Transverse colon (tissue), 4 donors: ENCODE measurements at regions of chr3 and their contacts with region 1.

Region 1: GRCh38 chr3:50674349-50675178 is at the start of gene DOCK3:
- DNase-seq: peak; percentile 55
- H3K4me3 ChIP-seq: peak within 1 kb of the TSS; percentile 22 to 47 (median 40)
- H3K27ac ChIP-seq: no peak within 1 kb of the TSS
- H3K4me1 ChIP-seq: peaks cover 0 to 14% (median 11%) of the 10 kb centered on the region in 4 donors
- H3K27me3 ChIP-seq: peaks cover 85% of the 10 kb centered on the region
- CTCF ChIP-seq: no peak
- EP300 ChIP-seq: no peak
- POLR2A ChIP-seq: no peak
- total RNA-seq, gene DOCK3: 0.41 to 0.75 (median 0.62) TPM

Region 2: GRCh38 chr3:50689558-50689957 is 15.0 kb after region 1 on chr3:
- in situ Hi-C with region 1: no loop called
- intact Hi-C with region 1: no loop called
- DNase-seq: no peak
- H3K4me3 ChIP-seq: no peak overlapping the region
- H3K27ac ChIP-seq: no peak overlapping the region
- H3K4me1 ChIP-seq: no peaks in the 10 kb centered on the region
- H3K27me3 ChIP-seq: peaks cover 8% of the 10 kb centered on the region
- CTCF ChIP-seq: no peak
- EP300 ChIP-seq: no peak
- POLR2A ChIP-seq: no peak

Region 3: DNA sequence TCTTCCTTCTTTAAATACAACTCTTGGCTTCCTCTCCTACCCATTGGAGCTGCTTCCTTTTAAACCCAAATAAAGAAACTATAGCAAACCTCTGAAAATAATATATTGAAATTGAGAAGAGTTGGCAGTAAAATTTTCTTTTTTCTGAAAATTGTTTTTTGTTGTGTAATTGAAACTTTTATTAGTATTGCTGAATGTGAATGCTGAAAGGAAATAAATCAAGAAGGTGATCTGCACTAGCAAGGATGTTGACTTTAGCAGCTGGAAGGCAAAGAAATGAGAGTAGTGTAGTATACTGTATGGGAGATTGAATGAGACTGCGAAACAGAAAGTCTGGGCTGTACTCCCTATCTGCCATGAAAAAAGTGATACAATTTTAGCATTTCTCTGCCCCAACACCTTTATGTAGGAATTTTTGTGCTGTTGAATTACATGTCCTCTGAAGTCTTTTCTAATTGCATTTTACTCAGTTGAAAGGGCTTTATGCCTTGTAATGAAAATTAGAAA is 166.5 kb after region 1 on chr3:
- in situ Hi-C with region 1: no loop called
- intact Hi-C with region 1: loop called (anchors 2 kb)
- DNase-seq: no peak
- H3K4me3 ChIP-seq: no peak overlapping the region
- H3K27ac ChIP-seq: no peak overlapping the region
- H3K4me1 ChIP-seq: no peaks in the 10 kb centered on the region
- H3K27me3 ChIP-seq: no peaks in the 10 kb centered on the region
- CTCF ChIP-seq: no peak
- EP300 ChIP-seq: no peak
- POLR2A ChIP-seq: no peak